CD4-positive, alpha-beta memory T cell (primary cell): ENCODE measurements at regions of chr9 and their contacts with region 1.

Region 1: GRCh38 chr9:130243015-130243734 is 22.4 kb upstream of the HMCN2 start:
- DNase-seq: peak; percentile 74 to 81 (median 75)
- H3K4me3 ChIP-seq: peak overlapping the region in 1 of 2 donors; percentile 44
- H3K4me3 Mint-ChIP-seq: peak overlapping the region; percentile 72 to 87 (median 82)
- H3K27ac ChIP-seq: no peak overlapping the region
- H3K27ac Mint-ChIP-seq: peak overlapping the region; percentile 29 to 90 (median 83)
- H3K4me1 ChIP-seq: peaks cover 33% of the 10 kb centered on the region
- H3K4me1 Mint-ChIP-seq: peaks cover 18 to 50% (median 26%) of the 10 kb centered on the region in 4 donors
- H3K27me3 ChIP-seq: no peaks in the 10 kb centered on the region
- H3K27me3 Mint-ChIP-seq: no peaks in the 10 kb centered on the region

Region 2: DNA sequence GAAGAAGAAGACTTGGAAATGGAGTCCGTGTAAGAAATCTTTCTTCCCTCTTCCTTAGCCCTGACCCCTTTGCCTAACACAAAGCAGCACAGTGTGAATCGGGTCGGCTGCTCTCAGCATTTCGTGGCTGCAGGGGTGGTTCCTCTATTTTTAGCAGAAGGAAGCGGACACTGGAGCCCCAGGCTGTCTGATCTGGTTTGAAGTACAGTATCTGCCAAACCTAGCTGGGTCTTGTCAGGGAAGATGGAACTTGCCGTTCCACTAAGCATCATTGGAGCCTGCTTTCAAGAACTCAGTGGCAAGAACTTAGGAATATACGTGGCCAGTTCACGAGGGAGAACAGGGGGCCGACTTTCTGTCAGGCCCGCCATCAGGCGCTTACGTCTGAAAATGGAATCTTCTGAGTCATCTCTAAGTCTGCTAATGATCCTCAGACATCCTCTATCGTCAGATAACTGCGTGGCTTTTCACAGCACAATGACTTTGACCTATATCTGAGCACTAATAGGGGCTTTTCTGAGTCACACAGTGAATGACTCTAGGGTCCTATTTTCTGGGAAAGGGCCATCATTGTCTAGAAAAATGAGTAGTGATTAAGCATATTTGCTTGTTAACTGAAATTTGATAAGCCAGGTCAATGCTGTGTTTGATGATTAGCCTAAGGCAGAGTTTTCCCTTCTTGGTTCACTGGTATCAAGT is 114.3 kb before region 1 on chr9:
- CTCF ChIA-PET with region 1: interaction called, 8 read pairs
- POLR2A ChIA-PET with region 1: interaction called, 3 read pairs
- intact Hi-C with region 1: loop called (anchors 5 kb)
- DNase-seq: peak; percentile 53 to 89 (median 60)
- H3K4me3 ChIP-seq: peak overlapping the region in 1 of 2 donors; percentile 39
- H3K4me3 Mint-ChIP-seq: peak overlapping the region; percentile 79 to 87 (median 84)
- H3K27ac ChIP-seq: peak overlapping the region; percentile 92
- H3K27ac Mint-ChIP-seq: peak overlapping the region; percentile 97 to 100 (median 99)
- H3K4me1 ChIP-seq: peaks cover 60% of the 10 kb centered on the region
- H3K4me1 Mint-ChIP-seq: peaks cover 40 to 67% (median 53%) of the 10 kb centered on the region in 4 donors
- H3K27me3 ChIP-seq: no peaks in the 10 kb centered on the region
- H3K27me3 Mint-ChIP-seq: no peaks in the 10 kb centered on the region

Region 3: GRCh38 chr9:130254752-130255630 is 11.8 kb after region 1 on chr9:
- CTCF ChIA-PET with region 1: interaction called, 22 read pairs
- POLR2A ChIA-PET with region 1: no interaction called
- intact Hi-C with region 1: no loop called
- DNase-seq: no peak
- H3K4me3 ChIP-seq: no peak overlapping the region
- H3K4me3 Mint-ChIP-seq: no peak overlapping the region
- H3K27ac ChIP-seq: no peak overlapping the region
- H3K27ac Mint-ChIP-seq: no peak overlapping the region
- H3K4me1 ChIP-seq: no peaks in the 10 kb centered on the region
- H3K4me1 Mint-ChIP-seq: no peaks in the 10 kb centered on the region
- H3K27me3 ChIP-seq: no peaks in the 10 kb centered on the region
- H3K27me3 Mint-ChIP-seq: peaks cover 10 to 21% of the 10 kb centered on the region in 2 donors